ENCODE measurements at regions of chr6 and their contacts with region 1.

Region 1: GRCh38 chr6:40599555-40599954 is 12.4 kb upstream of the LRFN2 start:
- DNase-seq: no peak
- ATAC-seq: no peak
- H3K4me3 ChIP-seq: no peak overlapping the region
- H3K27ac ChIP-seq: no peak overlapping the region
- H3K4me1 ChIP-seq: no peaks in the 10 kb centered on the region
- H3K27me3 ChIP-seq: peaks cover 6 to 25% (median 8%) of the 10 kb centered on the region in 3 donors
- CTCF ChIP-seq: no peak
- POLR2A ChIP-seq: no peak

Region 2: DNA sequence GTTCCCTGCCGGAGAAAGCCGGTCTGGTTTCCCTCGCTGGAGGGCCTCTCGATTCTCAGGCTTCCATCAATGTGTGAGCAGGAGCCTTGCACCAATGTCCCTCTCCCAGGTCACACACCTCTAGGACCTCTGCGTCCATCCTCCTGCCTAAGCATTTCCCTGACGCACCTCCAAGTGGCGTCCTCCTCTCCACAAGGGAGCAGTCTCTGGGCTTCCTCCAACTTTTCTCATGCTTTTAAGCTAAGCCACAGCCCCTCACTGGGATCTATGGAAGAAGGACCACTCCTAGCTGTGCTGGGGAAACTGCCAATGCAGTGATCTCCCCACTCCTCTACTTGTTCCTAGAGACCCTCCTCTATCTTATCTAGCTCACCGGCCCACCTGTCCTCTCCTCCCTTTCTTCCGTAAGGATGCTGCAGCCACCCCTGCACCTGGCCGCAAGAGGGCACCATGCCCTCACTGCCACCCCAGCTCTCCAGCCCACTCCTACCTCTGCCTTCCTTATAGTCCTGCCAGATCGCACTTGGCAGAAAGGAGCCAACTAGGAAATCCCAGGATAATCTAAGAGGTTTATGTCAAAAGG is 271.1 kb before region 1 on chr6:
- in situ Hi-C with region 1: loop called in 3 of 4 experiments (anchors 10 to 25 kb)
- intact Hi-C with region 1: no loop called
- DNase-seq: peak in 1 of 2 donors; percentile 34
- ATAC-seq: peak in 1 of 2 donors; percentile 63
- H3K4me3 ChIP-seq: no peak overlapping the region
- H3K27ac ChIP-seq: no peak overlapping the region
- H3K4me1 ChIP-seq: peaks cover 9% of the 10 kb centered on the region in 2 donors
- H3K27me3 ChIP-seq: no peaks in the 10 kb centered on the region
- CTCF ChIP-seq: peak; percentile 46 to 64 (median 61)
- POLR2A ChIP-seq: no peak

Measured in gastrocnemius medialis (tissue), 4 donors.